ENCODE measurements at regions of chr6 and their contacts with region 1.

Region 1: GRCh38 chr6:83389606-83390005 is 41.2 kb downstream of the ME1 start:
- DNase-seq: no peak
- ATAC-seq: no peak
- H3K4me3 ChIP-seq: no peak overlapping the region
- H3K27ac ChIP-seq: no peak overlapping the region
- H3K4me1 ChIP-seq: peaks cover 0 to 10% of the 10 kb centered on the region in 2 donors
- H3K27me3 ChIP-seq: no peaks in the 10 kb centered on the region
- CTCF ChIP-seq: no peak
- POLR2A ChIP-seq: no peak

Region 2: DNA sequence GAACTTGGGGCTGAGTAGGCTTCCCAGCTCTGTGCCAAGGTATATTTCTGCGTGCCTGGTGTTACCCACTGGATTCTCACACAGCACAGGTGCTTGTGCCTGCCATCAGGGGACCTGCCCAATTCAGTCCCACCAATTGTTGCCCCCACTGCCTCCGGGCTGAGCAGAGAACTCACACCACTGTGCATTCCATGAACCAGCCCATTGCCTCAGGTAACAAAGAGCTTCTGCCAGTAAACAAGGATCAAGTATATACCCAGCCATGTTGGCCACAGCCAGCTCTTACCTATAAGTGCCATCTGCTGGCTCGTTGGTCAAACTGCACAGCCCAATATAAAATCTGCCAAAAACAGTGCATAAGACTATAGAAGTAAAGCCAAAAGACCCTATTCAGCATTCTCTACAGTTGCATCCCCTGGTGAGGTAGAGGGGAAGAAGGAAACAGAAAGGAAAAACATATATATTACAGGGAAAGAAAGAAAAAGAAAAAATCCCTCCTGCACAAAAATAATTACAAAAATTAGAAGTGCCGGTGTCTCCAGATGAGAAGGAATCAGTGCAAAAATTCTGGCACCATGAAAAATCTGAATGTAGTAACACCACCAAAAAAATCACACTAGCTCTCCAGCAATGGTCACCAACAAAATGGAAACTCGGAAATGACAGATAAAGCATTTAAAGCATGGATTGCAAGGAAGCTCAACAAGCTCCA is 1383.4 kb before region 1 on chr6:
- in situ Hi-C with region 1: no loop called
- intact Hi-C with region 1: loop called (anchors 5 kb)
- DNase-seq: no peak
- ATAC-seq: no peak
- H3K4me3 ChIP-seq: no peak overlapping the region
- H3K27ac ChIP-seq: no peak overlapping the region
- H3K4me1 ChIP-seq: no peaks in the 10 kb centered on the region
- H3K27me3 ChIP-seq: no peaks in the 10 kb centered on the region
- CTCF ChIP-seq: no peak
- POLR2A ChIP-seq: no peak

Region 3: DNA sequence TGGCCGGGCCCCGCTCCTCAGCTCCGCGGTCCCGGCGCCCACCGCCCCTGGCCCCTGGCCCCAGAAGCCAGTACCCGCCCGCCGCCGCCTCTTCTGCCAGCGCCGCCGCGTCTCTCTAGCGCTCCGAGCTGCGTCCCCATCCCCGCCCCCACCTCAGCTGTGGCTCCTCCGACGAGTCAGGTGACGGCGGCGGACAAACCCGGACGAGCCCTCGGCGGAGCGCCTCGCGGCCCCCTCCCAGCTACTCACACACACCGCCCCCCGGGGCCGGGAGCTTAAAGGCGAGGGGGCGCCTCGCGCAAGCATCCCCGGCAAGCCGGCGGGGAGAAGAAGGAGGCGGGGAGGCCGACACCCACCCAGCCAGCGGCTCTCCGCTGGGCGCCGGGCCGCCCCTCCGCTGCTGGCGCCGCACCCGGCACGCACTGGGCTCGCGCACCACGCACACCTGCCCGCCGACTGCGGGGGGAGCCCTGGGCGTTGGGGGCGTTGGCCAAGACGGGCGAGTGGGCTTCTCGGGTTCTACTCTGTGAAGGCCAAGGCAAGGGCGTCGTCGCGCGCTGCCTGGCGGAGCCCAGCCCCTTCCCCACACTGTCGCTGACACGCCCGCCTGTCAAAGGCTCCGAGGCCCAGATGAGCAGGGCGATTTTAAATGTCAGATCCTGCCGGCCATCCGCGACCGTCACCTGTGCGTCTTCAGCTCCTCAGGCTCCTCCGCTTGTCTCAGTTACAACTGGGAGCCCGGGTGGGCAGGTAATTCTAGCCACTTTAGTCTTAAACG is 319.6 kb after region 1 on chr6 and contains the start of gene SNAP91:
- in situ Hi-C with region 1: no loop called
- intact Hi-C with region 1: no loop called
- DNase-seq: no peak
- ATAC-seq: no peak
- H3K4me3 ChIP-seq: peak within 1 kb of the TSS; percentile 49 to 53 (median 50)
- H3K27ac ChIP-seq: no peak within 1 kb of the TSS
- H3K4me1 ChIP-seq: no peaks in the 10 kb centered on the region
- H3K27me3 ChIP-seq: peaks cover 24 to 48% (median 40%) of the 10 kb centered on the region in 3 donors
- CTCF ChIP-seq: no peak
- POLR2A ChIP-seq: no peak
- total RNA-seq, gene SNAP91: 0.13 TPM in 1 of 4 donors, not detected in the others